Colonic mucosa (tissue), 4 donors: ENCODE measurements at regions of chr2 and their contacts with region 1.

Region 1: DNA sequence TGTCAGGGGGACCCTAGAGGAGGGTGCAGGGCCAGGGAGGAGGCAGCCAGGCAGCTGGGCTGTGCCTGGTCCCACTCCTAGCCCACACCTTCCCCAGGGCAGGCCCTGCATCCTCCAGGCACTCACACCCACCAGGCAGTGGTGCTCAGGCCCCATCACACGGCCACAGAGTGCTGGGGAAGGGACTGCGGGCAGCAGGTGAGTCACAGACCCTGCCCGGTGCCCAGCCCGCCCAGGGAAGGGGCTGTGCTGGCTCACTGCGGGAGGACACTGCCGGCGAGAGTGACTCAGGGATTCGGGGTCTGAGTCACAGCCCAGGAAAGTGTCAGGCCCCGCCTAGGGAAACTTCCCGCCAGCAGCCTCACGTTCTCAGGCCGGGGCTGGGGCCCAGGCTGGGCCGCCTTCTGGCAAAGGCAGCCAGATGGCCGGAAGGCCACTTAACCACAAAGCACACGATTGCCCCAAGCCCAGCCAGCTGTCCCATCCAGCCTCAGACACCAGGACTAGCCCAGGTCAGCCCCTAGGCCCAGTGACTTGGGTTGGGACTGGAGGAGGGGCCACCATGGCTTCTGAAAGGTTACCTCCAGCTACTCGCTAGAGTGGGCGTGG is 42.2 kb downstream of the BIN1 start:
- DNase-seq: peak; percentile 81
- H3K4me3 ChIP-seq: no peak overlapping the region
- H3K27ac ChIP-seq: peak overlapping the region; percentile 55
- H3K4me1 ChIP-seq: peaks cover 16% of the 10 kb centered on the region
- H3K27me3 ChIP-seq: no peaks in the 10 kb centered on the region
- CTCF ChIP-seq: no peak

Region 2: DNA sequence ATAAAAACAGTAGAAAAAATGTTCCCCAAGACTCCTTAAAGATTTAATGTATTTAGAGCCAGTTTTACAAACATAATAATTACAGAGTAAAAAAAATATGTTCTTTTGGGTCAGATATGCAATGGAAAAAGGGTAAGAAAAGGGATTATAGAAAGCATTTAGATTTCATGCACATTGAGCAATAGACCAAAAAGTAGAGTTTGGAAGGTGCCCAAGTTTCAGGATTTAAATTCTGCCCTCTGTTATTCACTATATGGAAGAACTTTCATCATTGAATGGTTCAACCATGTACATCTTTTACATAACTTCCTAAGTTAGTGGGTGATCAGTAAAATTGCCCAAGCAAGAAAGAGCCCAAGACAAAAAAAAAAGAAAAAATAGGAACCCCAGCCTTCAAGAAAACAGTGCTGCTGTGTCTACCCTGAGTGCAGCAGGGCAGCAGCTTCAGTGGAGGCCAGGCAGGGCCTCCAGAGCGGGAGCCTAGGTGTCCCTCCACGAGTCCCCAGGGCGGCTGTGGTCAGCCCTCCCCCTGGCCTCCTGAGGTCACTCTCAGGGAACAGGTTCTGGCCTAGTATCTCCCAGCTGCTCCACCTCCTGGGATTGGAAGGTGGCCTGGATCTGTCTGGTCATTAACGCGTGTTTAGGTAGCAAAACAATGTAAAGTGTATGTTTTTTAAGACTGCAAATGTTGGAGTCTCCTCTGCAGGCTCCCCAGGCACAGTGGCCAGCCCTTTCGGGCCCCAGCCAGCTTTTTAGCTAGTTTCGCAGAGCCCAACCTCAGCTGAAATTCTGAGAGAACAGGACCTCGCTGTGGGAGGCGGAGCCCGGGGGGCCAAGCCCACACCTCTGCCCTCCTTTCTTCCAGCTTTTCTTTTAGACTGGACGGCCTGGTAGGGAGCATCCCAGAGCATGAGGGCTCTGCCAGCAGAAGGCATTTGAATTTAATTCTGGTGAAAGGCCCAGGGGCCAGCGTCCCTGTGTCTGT is 88.8 kb before region 1 on chr2:
- intact Hi-C with region 1: no loop called
- DNase-seq: no peak
- H3K4me3 ChIP-seq: no peak overlapping the region
- H3K27ac ChIP-seq: no peak overlapping the region
- H3K4me1 ChIP-seq: peaks cover 4% of the 10 kb centered on the region
- H3K27me3 ChIP-seq: no peaks in the 10 kb centered on the region
- CTCF ChIP-seq: no peak

Region 3: DNA sequence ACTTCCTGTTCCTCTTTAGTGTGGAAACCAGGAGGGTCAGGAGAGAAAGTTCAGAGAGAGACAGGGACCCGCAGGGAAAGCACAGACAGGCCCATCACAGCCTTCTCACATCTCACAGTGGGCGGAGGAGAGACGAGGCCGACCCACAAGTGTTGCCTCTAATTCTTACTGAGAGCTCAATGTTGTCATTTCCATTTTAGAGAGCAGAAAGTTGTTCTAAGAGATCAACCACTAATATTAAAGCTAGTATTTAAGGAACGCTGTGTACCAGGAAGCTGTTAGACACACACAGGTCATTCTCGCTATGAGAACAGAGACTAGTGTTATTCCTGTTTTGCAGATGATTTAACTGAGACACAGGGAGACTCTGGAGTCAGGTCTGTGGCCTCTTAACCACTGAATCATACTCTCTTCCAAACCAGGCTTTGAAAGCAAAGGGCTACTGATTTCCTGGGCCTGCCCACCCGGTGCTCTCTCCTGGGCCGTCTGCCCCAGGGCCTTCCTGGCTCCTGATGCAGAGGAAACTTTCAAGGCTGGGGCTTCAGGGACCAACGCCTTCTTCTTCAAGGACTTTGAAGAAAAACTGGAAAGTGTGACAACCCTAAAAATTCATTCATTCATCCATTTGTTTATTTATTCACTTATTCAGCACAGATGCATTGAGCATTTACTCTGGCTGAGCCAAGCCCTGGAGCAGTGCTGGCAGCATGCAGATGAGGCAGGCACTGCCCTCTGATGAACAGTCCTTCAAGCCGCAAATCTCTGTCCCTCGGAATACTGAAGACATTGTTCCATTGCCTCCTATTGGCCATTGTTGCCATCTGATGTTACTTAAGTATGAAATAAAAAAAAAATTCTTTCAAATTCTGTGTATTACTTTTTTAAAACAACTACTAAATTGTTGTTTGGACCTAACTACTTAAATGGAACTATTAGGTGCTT is 79.4 kb after region 1 on chr2:
- intact Hi-C with region 1: loop called (anchors 5 kb)
- DNase-seq: no peak
- H3K4me3 ChIP-seq: no peak overlapping the region
- H3K27ac ChIP-seq: no peak overlapping the region
- H3K4me1 ChIP-seq: no peaks in the 10 kb centered on the region
- H3K27me3 ChIP-seq: no peaks in the 10 kb centered on the region
- CTCF ChIP-seq: no peak

Region 4: GRCh38 chr2:127174136-127174535 is 109.4 kb after region 1 on chr2:
- intact Hi-C with region 1: loop called (anchors 10 kb)
- DNase-seq: no peak
- H3K4me3 ChIP-seq: no peak overlapping the region
- H3K27ac ChIP-seq: no peak overlapping the region
- H3K4me1 ChIP-seq: peaks cover 4% of the 10 kb centered on the region
- H3K27me3 ChIP-seq: no peaks in the 10 kb centered on the region
- CTCF ChIP-seq: no peak

Region 5: DNA sequence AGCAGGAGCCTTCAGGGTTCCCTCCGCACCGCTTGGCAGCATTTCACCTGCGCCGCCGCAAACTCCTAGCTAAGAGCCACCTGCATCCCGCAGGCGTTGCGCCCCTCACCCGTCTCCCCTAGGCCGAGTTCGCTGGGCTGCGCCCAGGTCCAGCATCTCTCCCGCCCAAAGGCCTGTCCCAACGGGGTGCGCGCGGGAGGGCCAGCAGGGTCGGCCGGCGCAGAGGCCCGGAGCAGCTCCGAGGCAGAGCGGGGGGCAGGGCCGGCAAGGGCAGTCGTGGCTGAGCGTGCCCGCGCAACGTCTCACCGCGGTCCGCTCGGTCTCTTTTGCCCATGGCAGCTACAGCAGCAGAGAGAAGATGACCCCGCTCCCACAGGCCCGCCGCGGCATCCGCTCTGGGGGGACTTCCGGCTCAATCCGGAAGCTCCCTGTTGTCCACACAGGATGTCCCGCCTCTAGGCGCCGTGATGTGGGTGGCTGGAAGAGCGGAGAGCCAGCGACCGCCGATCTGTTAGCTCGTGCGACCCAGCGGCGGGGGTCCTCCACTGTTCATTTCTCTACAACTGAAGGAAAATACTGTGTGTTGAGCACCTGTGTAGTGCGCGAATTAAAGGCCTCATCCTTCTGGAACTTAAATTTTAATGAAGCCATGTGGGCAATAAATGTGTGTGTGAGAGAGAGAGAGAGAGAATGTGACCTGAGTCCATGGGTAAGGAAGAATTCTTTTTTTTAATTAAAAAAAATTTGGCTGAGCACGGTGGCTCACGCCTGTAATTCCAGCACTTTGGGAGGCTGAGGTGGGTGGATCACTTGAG is 229.2 kb after region 1 on chr2 and contains the start of gene ERCC3:
- intact Hi-C with region 1: loop called (anchors 5 kb)
- DNase-seq: peak; percentile 87
- H3K4me3 ChIP-seq: peak within 1 kb of the TSS; percentile 97
- H3K27ac ChIP-seq: peak within 1 kb of the TSS; percentile 35
- H3K4me1 ChIP-seq: peaks cover 7% of the 10 kb centered on the region
- H3K27me3 ChIP-seq: no peaks in the 10 kb centered on the region
- CTCF ChIP-seq: no peak
- total RNA-seq, gene ERCC3: 27.8 to 32.5 TPM